SK-N-SH (cell line): ENCODE measurements at regions of chr7 and their contacts with region 1.

Region 1: DNA sequence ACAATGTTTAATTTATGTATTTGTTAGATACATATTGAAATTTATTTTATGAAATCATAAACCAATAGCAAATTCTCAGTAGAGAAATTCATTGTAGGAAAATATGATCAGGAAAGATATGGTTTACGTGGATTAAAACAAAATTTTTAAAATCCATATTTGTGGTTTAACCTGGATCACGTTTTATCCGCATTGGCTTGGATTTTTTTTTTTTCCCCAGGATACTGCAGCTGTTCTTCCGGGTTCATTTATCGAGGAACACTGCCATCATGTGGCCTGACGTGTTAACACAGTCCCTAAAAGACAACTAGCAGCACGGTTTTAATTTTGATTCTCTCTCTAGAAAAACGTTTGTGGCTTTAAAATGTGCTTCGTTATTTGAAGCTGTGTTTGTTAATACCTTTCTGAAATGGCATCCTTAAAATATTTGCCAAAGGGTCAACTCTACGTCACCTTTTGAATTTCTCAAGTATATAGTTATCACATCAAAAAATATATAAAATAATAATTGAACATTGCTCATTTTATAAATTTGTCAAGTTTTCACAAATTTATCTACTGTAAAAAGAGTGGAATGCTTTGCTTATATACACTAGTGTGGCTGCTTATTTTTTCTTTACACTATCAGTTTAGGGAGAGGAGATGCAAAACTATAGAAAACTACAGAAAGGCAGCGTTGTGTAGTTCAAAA is 8.7 kb upstream of the ASB4 start:
- DNase-seq: peak; percentile 73
- H3K4me3 ChIP-seq: no peak overlapping the region
- H3K27ac ChIP-seq: no peak overlapping the region
- H3K4me1 ChIP-seq: peaks cover 0 to 8% of the 10 kb centered on the region in 2 experiments; a peak in 2 of 4 replicates
- H3K27me3 ChIP-seq: no peaks in the 10 kb centered on the region
- CTCF ChIP-seq: peak; percentile 98
- EP300 ChIP-seq: no peak
- RAD21 ChIP-seq: peak; percentile 98

Region 2: GRCh38 chr7:94289071-94289470 is 1188.0 kb before region 1 on chr7:
- CTCF ChIA-PET with region 1: interaction called, 23 read pairs
- POLR2A ChIA-PET with region 1: no interaction called
- DNase-seq: peak; percentile 68
- H3K4me3 ChIP-seq: no peak overlapping the region; a peak in 1 of 4 replicates
- H3K27ac ChIP-seq: no peak overlapping the region; a peak in 1 of 4 replicates
- H3K4me1 ChIP-seq: peaks cover 2 to 4% of the 10 kb centered on the region in 2 experiments; a peak in 2 of 4 replicates
- H3K27me3 ChIP-seq: no peaks in the 10 kb centered on the region
- CTCF ChIP-seq: peak; percentile 100
- EP300 ChIP-seq: no peak; a peak in 2 of 4 replicates
- RAD21 ChIP-seq: peak; percentile 100

Region 3: GRCh38 chr7:95199779-95200558 is 277.1 kb before region 1 on chr7:
- CTCF ChIA-PET with region 1: interaction called, 43 read pairs
- POLR2A ChIA-PET with region 1: no interaction called
- DNase-seq: peak; percentile 69
- H3K4me3 ChIP-seq: no peak overlapping the region; a peak in 1 of 4 replicates
- H3K27ac ChIP-seq: no peak overlapping the region
- H3K4me1 ChIP-seq: peaks cover 0 to 12% of the 10 kb centered on the region in 2 experiments; a peak in 2 of 4 replicates
- H3K27me3 ChIP-seq: peaks cover 7% of the 10 kb centered on the region; the same call in 1 of the 2 replicates
- CTCF ChIP-seq: peak; percentile 82
- EP300 ChIP-seq: no peak
- RAD21 ChIP-seq: peak; percentile 95

Region 4: GRCh38 chr7:95427166-95427565 is 49.9 kb before region 1 on chr7:
- CTCF ChIA-PET with region 1: interaction called, 14 read pairs
- POLR2A ChIA-PET with region 1: no interaction called
- DNase-seq: no peak
- H3K4me3 ChIP-seq: no peak overlapping the region
- H3K27ac ChIP-seq: no peak overlapping the region
- H3K4me1 ChIP-seq: no peaks in the 10 kb centered on the region; a peak in 1 of 4 replicates
- H3K27me3 ChIP-seq: no peaks in the 10 kb centered on the region
- CTCF ChIP-seq: no peak
- EP300 ChIP-seq: no peak
- RAD21 ChIP-seq: no peak

Region 5: DNA sequence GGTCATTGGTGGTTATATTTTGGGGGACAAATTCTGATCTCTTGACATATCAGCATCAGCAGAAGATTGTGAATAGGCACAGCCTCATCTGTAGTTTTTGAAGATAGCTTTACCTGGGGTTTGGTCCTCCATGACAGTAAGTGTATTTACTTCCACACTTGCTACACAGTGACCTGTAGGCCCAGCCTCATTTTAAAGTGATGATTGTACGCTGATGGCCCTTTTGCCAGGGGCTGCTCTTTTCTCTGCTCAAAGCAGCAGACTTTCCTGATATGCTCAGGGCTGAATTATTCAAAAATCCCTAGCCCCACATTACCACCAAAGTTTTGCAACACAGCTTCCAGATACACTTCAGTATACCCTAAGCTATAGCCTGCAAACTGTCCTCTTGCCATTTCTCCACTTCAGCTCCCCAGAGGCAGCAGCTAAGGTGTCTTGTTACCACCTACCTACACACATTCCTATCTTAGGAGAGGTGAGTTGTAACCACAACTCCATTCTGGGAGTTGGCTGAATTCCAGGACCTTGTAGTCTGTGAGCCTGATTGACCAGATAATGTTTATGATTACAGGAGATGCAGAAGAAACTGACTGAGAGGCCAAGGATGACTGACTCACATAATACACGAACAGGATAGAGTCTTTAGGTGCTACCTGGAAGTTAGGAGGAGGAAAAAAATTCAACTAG is 14.7 kb after region 1 on chr7:
- CTCF ChIA-PET with region 1: interaction called, 109 read pairs
- POLR2A ChIA-PET with region 1: no interaction called
- DNase-seq: no peak
- H3K4me3 ChIP-seq: no peak overlapping the region
- H3K27ac ChIP-seq: no peak overlapping the region
- H3K4me1 ChIP-seq: no peaks in the 10 kb centered on the region
- H3K27me3 ChIP-seq: no peaks in the 10 kb centered on the region
- CTCF ChIP-seq: no peak
- EP300 ChIP-seq: no peak
- RAD21 ChIP-seq: no peak

Region 6: GRCh38 chr7:95690367-95690947 is 213.4 kb after region 1 on chr7:
- CTCF ChIA-PET with region 1: interaction called, 16 read pairs
- POLR2A ChIA-PET with region 1: no interaction called
- DNase-seq: peak; percentile 27
- H3K4me3 ChIP-seq: peak overlapping the region in 1 of 2 experiments; percentile 23; a peak in 1 of 4 replicates
- H3K27ac ChIP-seq: no peak overlapping the region
- H3K4me1 ChIP-seq: peaks cover 0 to 6% of the 10 kb centered on the region in 2 experiments; a peak in 2 of 4 replicates
- H3K27me3 ChIP-seq: 0 out of 2 replicates have a peak, but pooled peaks cover 7% of the 10 kb centered on the region
- CTCF ChIP-seq: peak; percentile 96
- EP300 ChIP-seq: no peak
- RAD21 ChIP-seq: no peak; the same call in none of the 2 replicates